MCF 10A (cell line): ENCODE measurements at regions of chr16 and their contacts with region 1.

Region 1: DNA sequence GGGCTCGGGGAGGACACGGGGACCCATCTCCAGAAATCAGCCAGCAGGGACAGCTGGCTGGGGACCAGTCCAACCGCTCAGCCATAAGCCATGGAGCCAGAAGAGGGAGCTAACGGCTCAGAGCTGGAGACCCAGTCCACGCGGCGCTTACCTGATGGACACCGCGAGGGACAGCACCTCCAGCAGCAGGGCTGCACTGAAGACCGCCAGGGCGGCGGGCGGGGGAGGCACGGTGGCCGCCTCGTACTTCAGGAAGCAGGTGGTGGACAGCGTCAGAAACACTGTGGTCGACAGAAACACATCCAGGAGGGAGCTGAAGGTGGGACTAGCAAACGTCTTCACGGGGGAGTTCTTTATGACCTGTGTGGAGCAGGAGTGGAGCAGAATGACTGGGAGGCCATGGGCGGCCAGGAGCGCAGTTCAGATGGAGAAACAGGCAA is 102.6 kb upstream of the CREBBP start:
- DNase-seq: peak; percentile 77
- H3K4me3 Mint-ChIP-seq: no peak overlapping the region
- H3K27ac Mint-ChIP-seq: no peak overlapping the region
- H3K4me1 Mint-ChIP-seq: peaks cover 16% of the 10 kb centered on the region
- H3K27me3 Mint-ChIP-seq: no peaks in the 10 kb centered on the region
- CTCF ChIP-seq: peak; percentile 77

Region 2: DNA sequence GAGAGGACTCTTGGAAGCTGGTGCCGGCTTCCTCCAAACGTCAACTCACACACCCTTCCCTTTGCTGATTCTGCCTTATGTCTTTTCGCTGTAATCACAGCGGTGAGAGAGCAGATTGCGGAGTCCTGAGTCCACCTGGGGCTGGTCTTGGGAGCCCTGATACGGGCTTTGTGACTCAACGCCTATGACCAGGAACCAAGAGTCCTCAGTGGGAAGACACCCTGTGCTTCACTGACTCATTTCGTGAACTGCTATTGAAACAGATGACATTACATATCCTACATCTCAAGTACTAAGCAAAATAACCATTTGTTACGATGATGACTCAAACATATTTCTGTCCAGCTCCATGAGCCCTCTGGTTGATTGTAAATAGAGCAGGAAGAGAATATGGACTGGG is 11.8 kb before region 1 on chr16:
- CTCF ChIA-PET with region 1: interaction called, 17 read pairs
- POLR2A ChIA-PET with region 1: no interaction called
- intact Hi-C with region 1: no loop called
- DNase-seq: peak; percentile 26
- H3K4me3 Mint-ChIP-seq: no peak overlapping the region
- H3K27ac Mint-ChIP-seq: no peak overlapping the region
- H3K4me1 Mint-ChIP-seq: no peaks in the 10 kb centered on the region
- H3K27me3 Mint-ChIP-seq: no peaks in the 10 kb centered on the region
- CTCF ChIP-seq: no peak

Region 3: GRCh38 chr16:4116337-4117249 is 133.5 kb after region 1 on chr16 and contains the start of gene ADCY9:
- CTCF ChIA-PET with region 1: interaction called, 6 read pairs
- POLR2A ChIA-PET with region 1: interaction called, 5 read pairs
- intact Hi-C with region 1: loop called (anchors 1 kb)
- DNase-seq: peak; percentile 62
- H3K4me3 Mint-ChIP-seq: peak within 1 kb of the TSS; percentile 74
- H3K27ac Mint-ChIP-seq: peak within 1 kb of the TSS; percentile 65
- H3K4me1 Mint-ChIP-seq: peaks cover 26% of the 10 kb centered on the region
- H3K27me3 Mint-ChIP-seq: no peaks in the 10 kb centered on the region
- CTCF ChIP-seq: no peak
- total RNA-seq, gene ADCY9: 13.1 and 14.2 TPM in 2 replicates

Region 4: GRCh38 chr16:4176612-4177417 is 193.7 kb after region 1 on chr16:
- CTCF ChIA-PET with region 1: interaction called, 5 read pairs
- POLR2A ChIA-PET with region 1: no interaction called
- intact Hi-C with region 1: loop called (anchors 5 kb)
- DNase-seq: peak; percentile 77
- H3K4me3 Mint-ChIP-seq: no peak overlapping the region
- H3K27ac Mint-ChIP-seq: no peak overlapping the region
- H3K4me1 Mint-ChIP-seq: peaks cover 20% of the 10 kb centered on the region
- H3K27me3 Mint-ChIP-seq: no peaks in the 10 kb centered on the region
- CTCF ChIP-seq: no peak

Region 5: GRCh38 chr16:4200000-4200780 is 217.1 kb after region 1 on chr16:
- CTCF ChIA-PET with region 1: interaction called, 4 read pairs
- POLR2A ChIA-PET with region 1: no interaction called
- intact Hi-C with region 1: loop called (anchors 1 kb)
- DNase-seq: peak; percentile 80
- H3K4me3 Mint-ChIP-seq: no peak overlapping the region
- H3K27ac Mint-ChIP-seq: no peak overlapping the region
- H3K4me1 Mint-ChIP-seq: peaks cover 10% of the 10 kb centered on the region
- H3K27me3 Mint-ChIP-seq: no peaks in the 10 kb centered on the region
- CTCF ChIP-seq: peak; percentile 84

Region 6: GRCh38 chr16:4261557-4262172 is 278.6 kb after region 1 on chr16:
- CTCF ChIA-PET with region 1: interaction called, 19 read pairs
- POLR2A ChIA-PET with region 1: no interaction called
- intact Hi-C with region 1: no loop called
- DNase-seq: peak; percentile 23
- H3K4me3 Mint-ChIP-seq: no peak overlapping the region
- H3K27ac Mint-ChIP-seq: no peak overlapping the region
- H3K4me1 Mint-ChIP-seq: peaks cover 5% of the 10 kb centered on the region
- H3K27me3 Mint-ChIP-seq: no peaks in the 10 kb centered on the region
- CTCF ChIP-seq: peak; percentile 75

Region 7: DNA sequence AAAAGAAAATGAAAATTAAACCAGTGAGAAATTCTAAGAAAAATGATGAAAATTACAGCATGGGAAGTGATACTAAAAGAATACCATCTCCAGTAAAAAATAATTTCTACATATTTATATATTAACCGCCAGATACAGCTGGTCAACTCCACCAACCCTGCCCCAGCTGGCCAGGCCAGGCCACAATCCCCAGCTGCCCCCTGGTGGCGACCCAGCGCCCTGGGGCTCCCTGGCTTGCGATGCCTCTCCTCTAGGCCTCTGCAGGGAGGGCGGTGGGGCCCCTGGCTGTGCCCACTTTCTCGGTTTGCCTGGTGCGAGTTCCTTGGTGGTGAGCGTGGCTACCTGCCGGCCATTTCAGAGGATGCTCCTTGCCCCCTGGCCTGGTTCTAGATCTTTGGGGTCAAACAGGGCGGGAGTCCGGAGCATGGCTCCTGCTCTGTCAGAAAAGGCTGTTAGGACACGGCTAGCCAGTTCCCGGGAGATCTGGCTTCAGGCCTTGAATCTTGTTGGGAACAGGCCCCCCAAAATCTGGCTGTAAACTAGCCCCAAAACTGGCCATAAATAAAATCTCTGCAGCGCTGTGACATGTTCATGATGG is 347.3 kb after region 1 on chr16:
- CTCF ChIA-PET with region 1: interaction called, 12 read pairs
- POLR2A ChIA-PET with region 1: no interaction called
- intact Hi-C with region 1: loop called (anchors 2 kb)
- DNase-seq: peak; percentile 76
- H3K4me3 Mint-ChIP-seq: no peak overlapping the region
- H3K27ac Mint-ChIP-seq: no peak overlapping the region
- H3K4me1 Mint-ChIP-seq: no peaks in the 10 kb centered on the region
- H3K27me3 Mint-ChIP-seq: no peaks in the 10 kb centered on the region
- CTCF ChIP-seq: peak; percentile 98